HCT116 (cell line): ENCODE measurements at regions of chr12 and their contacts with region 1.

Region 1: DNA sequence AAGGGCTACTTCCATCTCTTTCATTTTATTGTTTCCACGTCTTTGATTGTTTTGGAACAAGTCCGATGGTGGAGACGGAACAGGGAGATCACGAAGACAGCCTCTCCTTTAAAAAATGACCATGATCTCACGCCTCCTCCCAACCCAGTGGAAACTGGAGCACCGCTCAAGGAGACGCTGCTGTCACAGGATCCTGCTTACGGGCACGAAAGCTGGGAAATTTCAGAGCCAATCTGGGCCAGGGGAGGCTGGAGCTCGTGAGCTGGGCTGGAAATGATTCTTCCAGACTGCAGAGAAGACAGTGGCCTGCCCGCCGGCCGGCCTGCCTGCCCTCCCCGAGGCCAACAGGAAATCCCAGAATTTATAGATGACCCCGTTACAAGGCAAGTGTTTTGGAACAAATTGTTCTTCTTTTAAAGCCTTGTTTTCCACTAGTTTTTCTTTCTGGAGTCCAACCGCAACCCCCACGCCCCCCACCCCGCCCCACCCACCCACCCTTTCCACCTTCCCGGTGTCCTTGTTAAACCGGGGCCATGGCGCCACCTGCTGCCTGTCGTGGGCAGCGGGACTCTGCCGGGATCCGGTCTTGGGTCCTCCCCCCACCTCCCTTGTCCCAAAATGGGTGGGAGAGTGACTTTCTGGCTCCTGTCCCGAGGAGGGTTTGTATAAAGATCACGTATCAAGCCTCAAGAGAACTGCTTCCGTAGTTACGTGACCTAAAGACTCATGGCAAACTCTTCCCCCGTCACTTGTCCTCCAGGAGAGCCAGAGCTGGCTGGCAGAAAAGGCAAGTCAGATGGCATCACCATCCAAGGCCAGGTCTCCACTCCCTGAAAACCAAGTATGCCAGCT is 40.3 kb downstream of the MAP1LC3B2 start:
- DNase-seq: peak; percentile 26
- ATAC-seq: peak; percentile 90
- H3K4me3 ChIP-seq: no peak overlapping the region
- H3K27ac ChIP-seq: peak overlapping the region; percentile 23; the same call in 1 of the 2 replicates
- H3K4me1 ChIP-seq: peaks cover 20 to 48% of the 10 kb centered on the region in 2 experiments
- H3K27me3 ChIP-seq: no peaks in the 10 kb centered on the region
- CTCF ChIP-seq: peak; percentile 30 to 75 (median 56); a peak in 4 of 6 replicates
- POLR2A ChIP-seq: no peak
- RAD21 ChIP-seq: peak; percentile 72

Region 2: GRCh38 chr12:115998119-115998633 is 601.3 kb before region 1 on chr12:
- CTCF ChIA-PET with region 1: no interaction called
- POLR2A ChIA-PET with region 1: no interaction called
- RAD21 ChIA-PET with region 1: no interaction called
- intact Hi-C with region 1: loop called (anchors 2 kb)
- DNase-seq: peak; percentile 32
- ATAC-seq: peak; percentile 69
- H3K4me3 ChIP-seq: no peak overlapping the region
- H3K27ac ChIP-seq: peak overlapping the region; percentile 14; the same call in 1 of the 2 replicates
- H3K4me1 ChIP-seq: peaks cover 0 to 9% of the 10 kb centered on the region in 2 experiments; a peak in 1 of 4 replicates
- H3K27me3 ChIP-seq: no peaks in the 10 kb centered on the region
- CTCF ChIP-seq: peak; percentile 48 to 82 (median 68); a peak in 5 of 6 replicates
- POLR2A ChIP-seq: no peak
- RAD21 ChIP-seq: peak; percentile 61

Region 3: DNA sequence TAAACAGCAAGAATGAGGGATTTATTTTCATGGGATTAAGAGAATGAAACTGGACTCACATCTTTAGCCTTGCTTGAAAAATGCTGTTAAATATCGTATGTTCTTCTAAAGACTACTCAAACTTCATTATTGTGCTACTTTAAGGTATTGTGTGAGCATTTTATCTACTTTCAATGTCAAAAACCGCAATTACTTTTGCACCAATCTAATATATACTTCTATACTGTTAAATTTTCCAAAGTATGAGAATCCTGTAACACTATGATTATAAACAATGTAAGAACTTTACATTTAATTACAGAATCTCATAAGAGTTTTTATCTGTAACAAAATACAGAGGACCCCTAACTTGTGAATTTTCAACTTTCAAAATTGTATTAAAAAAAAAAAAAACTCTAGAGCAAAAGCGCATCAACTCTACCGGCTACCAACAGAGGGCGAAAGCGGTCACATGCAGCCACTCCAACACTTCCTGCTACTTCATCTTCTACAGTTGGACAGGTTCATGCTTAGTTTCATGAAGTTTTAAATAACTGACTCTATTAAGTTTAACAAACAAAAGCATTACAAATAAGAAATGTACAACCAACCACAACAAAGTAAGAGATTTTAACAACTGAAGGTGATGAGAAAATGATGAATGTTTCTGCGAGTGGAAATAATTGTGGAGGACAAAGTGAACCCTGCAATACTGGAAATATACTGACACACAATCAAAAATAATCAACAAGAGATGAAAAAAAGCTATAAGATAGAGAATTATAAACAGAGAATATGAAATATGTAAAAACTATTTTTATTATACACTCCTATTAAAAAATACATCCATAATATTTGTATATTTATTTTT is 532.9 kb before region 1 on chr12:
- CTCF ChIA-PET with region 1: no interaction called
- POLR2A ChIA-PET with region 1: no interaction called
- RAD21 ChIA-PET with region 1: no interaction called
- intact Hi-C with region 1: loop called (anchors 10 kb)
- DNase-seq: peak; percentile 33
- ATAC-seq: peak; percentile 79
- H3K4me3 ChIP-seq: no peak overlapping the region
- H3K27ac ChIP-seq: no peak overlapping the region
- H3K4me1 ChIP-seq: peaks cover 2 to 7% of the 10 kb centered on the region in 2 experiments; a peak in 2 of 4 replicates
- H3K27me3 ChIP-seq: no peaks in the 10 kb centered on the region
- CTCF ChIP-seq: peak; percentile 58 to 88 (median 86); a peak in 5 of 6 replicates
- POLR2A ChIP-seq: no peak
- RAD21 ChIP-seq: peak; percentile 64

Region 4: DNA sequence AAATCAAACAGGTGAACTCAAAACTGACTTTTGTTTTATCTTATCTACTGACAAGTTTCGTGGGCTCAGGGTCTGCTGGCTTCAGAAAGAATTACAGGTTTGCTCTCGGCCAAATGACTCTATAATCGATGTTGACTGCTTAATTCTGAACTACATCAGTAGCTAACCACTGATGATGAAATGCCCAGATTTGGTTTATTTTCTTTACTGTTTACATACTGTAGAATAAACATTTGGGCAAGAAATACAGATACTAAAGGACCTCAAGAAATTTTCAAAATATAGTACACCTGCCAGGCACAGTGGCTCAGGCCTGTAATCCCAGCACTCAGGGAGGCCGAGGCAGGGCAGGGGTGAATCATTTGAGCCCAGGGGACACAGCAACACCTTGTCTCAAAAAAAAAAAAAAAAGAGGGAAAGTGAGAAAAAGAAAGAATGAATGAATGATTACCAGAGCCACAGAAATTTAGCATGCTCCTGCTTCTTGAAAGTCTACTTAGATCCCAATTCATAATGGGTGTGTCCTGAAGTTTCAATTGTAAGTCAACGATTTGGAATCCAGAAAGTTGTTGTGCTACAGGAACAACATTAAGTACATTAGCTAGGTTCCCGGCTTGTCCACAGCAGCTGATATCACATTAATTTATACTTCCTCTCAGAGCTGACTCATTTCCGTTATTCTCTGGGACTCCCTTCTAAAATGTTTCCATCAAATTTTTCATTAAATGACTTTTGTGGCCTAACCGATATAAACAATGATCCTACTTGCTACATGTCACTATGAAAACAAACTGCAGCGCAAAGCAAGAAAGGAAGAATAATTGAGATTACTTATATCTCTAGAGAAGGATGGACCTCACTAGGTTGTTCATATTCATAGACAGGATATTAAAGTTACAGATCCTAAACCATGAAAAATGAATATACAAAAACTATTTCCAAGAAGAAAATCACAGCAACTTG is 456.3 kb before region 1 on chr12:
- CTCF ChIA-PET with region 1: interaction called, 12 read pairs
- POLR2A ChIA-PET with region 1: no interaction called
- RAD21 ChIA-PET with region 1: no interaction called
- intact Hi-C with region 1: loop called (anchors 2 kb)
- DNase-seq: no peak
- ATAC-seq: no peak
- H3K4me3 ChIP-seq: no peak overlapping the region
- H3K27ac ChIP-seq: peak overlapping the region; percentile 21; the same call in 1 of the 2 replicates
- H3K4me1 ChIP-seq: peaks cover 30 to 74% of the 10 kb centered on the region in 2 experiments
- H3K27me3 ChIP-seq: no peaks in the 10 kb centered on the region
- CTCF ChIP-seq: no peak
- POLR2A ChIP-seq: no peak
- RAD21 ChIP-seq: no peak